ENCODE measurements at regions of chr12 and their contacts with region 1.

Region 1: DNA sequence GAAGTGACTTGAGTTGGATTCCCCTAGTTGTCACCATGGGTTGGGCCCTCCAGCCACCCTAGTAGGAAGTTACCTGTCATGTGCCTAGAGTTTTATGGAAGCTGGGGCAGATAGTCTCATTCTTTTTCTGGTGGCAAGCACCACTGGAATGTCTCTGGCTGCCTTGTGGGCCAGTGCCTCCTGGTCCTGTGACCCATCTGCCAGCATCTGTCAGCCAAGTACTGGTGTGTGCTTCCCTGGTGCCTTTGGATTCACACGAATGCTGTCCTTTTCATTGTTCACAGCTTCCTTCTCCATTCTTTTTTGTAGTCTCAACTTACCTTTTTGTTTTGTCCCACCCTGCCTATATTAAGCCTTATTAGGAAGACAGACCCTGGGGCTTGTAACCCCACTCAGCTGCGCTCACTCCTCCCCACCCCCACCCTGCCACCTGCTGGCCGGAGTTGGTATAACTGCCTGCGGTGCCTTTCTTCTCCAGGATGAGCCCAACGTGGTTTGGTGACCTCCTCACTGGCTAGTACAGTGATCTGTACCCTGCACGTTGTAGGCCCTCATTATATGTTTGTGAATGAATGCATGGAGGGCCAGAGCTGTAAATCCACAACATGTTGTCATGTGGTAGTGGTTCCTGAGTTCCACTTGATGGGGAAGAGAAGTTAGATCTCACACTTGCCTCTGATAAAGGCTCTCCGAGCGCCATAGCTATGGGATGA is 125.7 kb downstream of the TSPAN9 start:
- DNase-seq: peak; percentile 82
- ATAC-seq: peak; percentile 57
- H3K4me3 Mint-ChIP-seq: no peak overlapping the region
- H3K27ac Mint-ChIP-seq: no peak overlapping the region
- H3K4me1 Mint-ChIP-seq: peaks cover 9% of the 10 kb centered on the region
- H3K27me3 Mint-ChIP-seq: peaks cover 39% of the 10 kb centered on the region

Region 2: DNA sequence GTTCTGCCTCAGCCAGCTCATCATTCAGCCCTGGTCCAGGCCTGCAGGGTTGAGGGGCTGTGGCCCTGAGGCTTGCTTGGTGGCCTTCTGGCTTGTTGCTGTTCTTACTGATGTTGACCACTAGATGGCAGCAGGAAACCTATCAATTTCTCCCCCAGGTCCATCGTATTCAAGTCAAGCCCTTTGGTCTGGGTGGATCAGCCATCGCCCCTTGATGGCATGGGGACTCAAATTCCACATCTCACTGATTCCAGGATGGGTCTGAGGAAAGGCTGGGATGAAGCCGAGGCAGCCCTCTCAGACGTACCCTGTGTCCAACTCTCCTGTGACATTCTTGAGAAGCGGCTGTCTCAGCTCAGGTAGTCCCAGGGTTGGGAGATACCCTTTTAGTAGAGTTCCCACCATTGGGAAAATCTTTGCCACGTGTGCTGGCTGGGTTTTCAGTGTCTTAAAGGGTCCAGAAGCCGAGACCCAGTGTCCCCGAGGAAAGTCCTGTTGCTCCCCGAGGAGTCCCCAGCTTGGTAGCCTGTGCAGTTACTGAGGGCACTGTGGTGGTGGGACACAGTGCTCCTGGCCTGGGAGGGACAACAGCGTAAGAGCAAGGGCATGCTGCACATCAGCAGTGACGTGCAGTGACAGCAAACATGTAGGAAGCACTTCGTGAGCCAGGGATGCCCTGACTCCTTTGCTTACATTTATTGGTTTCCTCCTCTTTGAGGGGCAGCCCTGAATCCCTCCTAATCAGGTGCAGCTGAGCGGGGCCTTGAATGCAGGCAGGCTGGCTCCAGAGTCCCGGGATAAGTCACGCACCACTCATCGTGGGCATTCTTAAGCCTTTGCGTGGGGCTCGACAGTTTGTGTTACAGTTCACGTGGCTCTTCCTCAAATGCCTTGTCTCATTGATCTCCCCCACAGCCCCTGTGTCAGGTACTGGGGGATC is 67.1 kb before region 1 on chr12:
- CTCF ChIA-PET with region 1: interaction called, 7 read pairs
- POLR2A ChIA-PET with region 1: no interaction called
- intact Hi-C with region 1: loop called (anchors 1 kb)
- DNase-seq: peak; percentile 55
- ATAC-seq: peak; percentile 85
- H3K4me3 Mint-ChIP-seq: no peak overlapping the region
- H3K27ac Mint-ChIP-seq: no peak overlapping the region
- H3K4me1 Mint-ChIP-seq: peaks cover 2% of the 10 kb centered on the region
- H3K27me3 Mint-ChIP-seq: peaks cover 26% of the 10 kb centered on the region

Region 3: DNA sequence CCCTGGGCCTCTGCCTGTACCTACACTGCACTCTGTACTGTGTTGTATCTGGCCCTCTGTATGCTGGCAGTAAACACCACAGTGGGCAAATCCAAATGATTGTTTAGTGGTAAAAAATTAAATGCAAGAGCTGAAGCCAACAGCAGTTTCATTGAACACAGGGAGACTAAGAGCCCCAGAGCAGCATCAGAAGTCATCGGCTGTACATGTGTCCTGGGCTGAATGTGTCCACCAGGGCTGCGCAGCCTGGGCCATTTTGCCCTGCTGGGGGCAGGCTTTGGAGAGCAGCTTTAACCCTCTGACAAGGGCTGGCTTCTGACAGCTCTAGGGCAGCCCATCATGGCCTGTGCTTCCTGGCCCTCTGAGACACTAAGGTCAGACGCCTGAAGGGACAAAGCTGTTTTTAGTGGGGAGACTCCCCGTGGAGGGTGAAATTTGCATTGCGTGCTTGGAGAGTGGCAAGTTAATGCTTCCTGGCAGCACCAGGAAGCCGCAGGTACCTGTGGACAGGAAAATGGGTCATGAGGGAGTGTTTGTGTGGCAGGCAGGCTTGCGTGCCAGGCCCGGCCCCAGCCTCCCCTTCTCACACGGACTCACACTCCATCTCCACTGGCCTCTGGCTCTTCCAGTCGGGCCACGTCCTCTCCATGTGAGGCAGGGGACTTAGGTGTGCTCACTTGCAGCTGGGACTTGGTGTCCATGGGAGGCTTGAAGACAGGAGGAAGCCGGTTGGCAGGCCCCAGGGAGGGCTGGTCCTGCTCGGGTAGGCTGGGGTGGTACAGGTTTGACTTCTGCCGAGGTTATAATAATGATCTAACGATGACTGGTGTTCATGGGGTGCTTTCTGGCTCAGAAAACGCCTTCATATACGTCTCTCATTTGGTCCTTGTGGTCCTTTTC is 24.4 kb after region 1 on chr12:
- CTCF ChIA-PET with region 1: no interaction called
- POLR2A ChIA-PET with region 1: no interaction called
- intact Hi-C with region 1: no loop called
- DNase-seq: no peak
- ATAC-seq: no peak
- H3K4me3 Mint-ChIP-seq: no peak overlapping the region
- H3K27ac Mint-ChIP-seq: no peak overlapping the region
- H3K4me1 Mint-ChIP-seq: no peaks in the 10 kb centered on the region
- H3K27me3 Mint-ChIP-seq: no peaks in the 10 kb centered on the region

Region 4: DNA sequence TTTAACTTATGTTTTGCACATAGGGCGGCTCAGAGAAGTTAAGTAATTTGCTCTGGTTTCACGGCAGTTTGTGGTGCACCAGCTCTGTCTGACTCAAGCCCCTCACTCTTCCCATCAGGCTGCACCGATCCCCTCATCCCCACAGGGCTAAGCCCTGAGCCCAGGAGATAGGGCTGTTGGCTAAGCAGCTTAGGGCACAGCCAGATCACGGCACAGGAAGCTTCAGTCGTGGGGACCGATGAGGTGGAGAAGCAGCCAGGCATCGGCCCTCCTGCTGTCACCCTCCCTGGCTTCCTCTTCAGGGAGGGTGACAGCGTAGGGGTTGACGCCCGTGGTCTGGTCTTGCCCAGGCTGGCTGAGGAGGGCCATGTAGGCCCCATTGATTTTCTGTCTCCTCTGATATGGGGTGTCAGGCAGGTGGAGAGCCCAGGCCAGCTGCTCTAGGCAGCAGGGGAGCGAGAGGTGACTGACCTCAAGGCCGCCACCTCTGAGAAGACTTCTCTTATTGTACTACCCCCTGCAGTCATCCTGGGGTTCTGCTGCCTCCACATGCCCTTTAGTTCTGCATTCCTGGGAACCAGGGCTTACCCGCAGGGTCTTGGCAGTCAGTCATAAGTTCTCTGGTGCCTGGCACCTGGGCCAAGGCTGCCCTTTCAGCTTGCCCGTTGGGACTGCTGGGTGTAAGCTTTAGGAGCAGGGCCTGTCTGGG is 40.6 kb after region 1 on chr12:
- CTCF ChIA-PET with region 1: no interaction called
- POLR2A ChIA-PET with region 1: no interaction called
- intact Hi-C with region 1: no loop called
- DNase-seq: no peak
- ATAC-seq: no peak
- H3K4me3 Mint-ChIP-seq: no peak overlapping the region
- H3K27ac Mint-ChIP-seq: no peak overlapping the region
- H3K4me1 Mint-ChIP-seq: no peaks in the 10 kb centered on the region
- H3K27me3 Mint-ChIP-seq: no peaks in the 10 kb centered on the region

Region 5: DNA sequence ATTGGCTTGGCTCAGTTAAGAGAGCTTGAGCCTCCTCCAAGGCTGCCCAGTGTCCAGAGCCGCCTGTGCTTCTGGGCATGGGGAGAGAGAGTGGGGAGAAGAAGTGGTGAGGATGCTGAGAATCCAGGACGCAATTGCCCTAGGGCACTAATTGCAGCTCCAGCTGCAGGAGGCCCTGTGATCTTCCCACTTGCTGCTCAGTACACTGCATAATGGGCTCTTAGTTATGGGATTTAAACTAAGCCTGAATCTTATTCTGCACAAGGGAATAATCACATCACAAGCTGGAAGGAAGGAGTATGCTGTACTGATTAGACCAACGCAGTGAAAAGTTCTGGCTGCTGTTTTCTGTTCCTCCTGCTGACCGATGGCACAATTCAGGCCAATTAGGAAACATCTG is 187.1 kb after region 1 on chr12:
- CTCF ChIA-PET with region 1: no interaction called
- POLR2A ChIA-PET with region 1: no interaction called
- intact Hi-C with region 1: no loop called
- DNase-seq: no peak
- ATAC-seq: no peak
- H3K4me3 Mint-ChIP-seq: no peak overlapping the region
- H3K27ac Mint-ChIP-seq: no peak overlapping the region
- H3K4me1 Mint-ChIP-seq: no peaks in the 10 kb centered on the region
- H3K27me3 Mint-ChIP-seq: peaks cover 15% of the 10 kb centered on the region

Region 6: DNA sequence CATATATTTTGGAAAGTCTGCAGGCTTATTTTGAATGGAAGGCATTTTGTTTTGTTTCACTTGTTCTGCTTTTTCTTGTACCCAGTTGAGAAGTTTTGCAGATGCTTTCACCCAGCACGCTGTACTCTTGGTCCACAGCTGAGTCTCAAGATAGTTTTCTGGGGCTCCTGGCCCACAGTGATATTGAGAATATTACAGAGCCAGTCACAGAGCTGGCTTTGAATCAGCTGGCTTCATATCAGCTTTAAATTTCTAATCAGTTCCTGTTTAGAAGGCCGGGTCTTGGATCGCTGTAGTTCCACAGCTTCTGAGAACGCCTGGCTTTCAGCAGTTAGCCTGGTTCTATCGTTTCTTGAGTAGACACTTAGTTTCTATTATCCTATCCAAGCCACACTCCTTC is 702.8 kb after region 1 on chr12:
- CTCF ChIA-PET with region 1: no interaction called
- POLR2A ChIA-PET with region 1: no interaction called
- intact Hi-C with region 1: no loop called
- DNase-seq: peak; percentile 25
- ATAC-seq: peak; percentile 66
- H3K4me3 Mint-ChIP-seq: peak overlapping the region; percentile 66
- H3K27ac Mint-ChIP-seq: peak overlapping the region; percentile 81
- H3K4me1 Mint-ChIP-seq: peaks cover 47% of the 10 kb centered on the region
- H3K27me3 Mint-ChIP-seq: no peaks in the 10 kb centered on the region

Measured in activated CD4-positive, alpha-beta T cell treated with anti-CD3 and anti-CD28 coated beads for 36 hours (primary cell).